Activated CD4-positive, alpha-beta T cell treated with anti-CD3 and anti-CD28 coated beads, Interleukin-2, amount 10 ng/mL, durations not matched to agents 24 days and 14 days (primary cell): ENCODE measurements at regions of chr3 and their contacts with region 1.

Region 1: GRCh38 chr3:146664403-146664802 is 59.3 kb upstream of the PLSCR5 start:
- DNase-seq: no peak
- H3K4me3 Mint-ChIP-seq: no peak overlapping the region
- H3K27ac Mint-ChIP-seq: no peak overlapping the region
- H3K4me1 Mint-ChIP-seq: no peaks in the 10 kb centered on the region
- H3K27me3 Mint-ChIP-seq: no peaks in the 10 kb centered on the region

Region 2: DNA sequence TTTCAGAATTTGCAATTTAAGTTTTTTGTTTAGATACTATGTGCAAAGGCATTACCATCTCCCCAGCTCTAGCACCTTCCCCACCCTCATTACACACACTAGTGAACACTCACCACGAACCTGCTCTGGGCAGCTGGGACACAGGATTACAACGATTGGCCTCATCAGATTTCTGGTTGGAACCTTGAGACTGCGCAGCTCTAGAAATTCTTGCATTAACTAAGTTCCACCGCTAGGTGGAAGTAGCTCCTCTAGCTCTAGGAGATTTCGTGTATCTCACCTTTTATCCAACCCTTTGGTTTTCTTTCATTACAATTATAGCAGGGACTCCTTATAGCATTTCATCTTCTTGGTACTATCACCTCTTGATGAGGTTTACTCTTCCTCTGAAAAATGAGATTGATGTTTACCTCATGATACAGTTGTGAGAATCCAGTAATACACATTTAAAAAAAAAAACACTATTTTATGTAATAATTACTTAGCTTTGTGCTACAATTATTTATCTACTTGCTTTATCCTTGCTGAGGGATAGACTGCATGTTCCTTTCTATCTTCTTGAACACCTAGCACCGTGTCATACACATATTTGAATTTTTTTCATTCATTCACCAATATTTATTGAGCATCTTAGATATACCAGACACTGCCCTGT is 474.8 kb before region 1 on chr3:
- intact Hi-C with region 1: no loop called
- DNase-seq: peak; percentile 73
- H3K4me3 Mint-ChIP-seq: no peak overlapping the region
- H3K27ac Mint-ChIP-seq: no peak overlapping the region
- H3K4me1 Mint-ChIP-seq: no peaks in the 10 kb centered on the region
- H3K27me3 Mint-ChIP-seq: peaks cover 8% of the 10 kb centered on the region

Region 3: GRCh38 chr3:146682171-146682570 is 17.8 kb after region 1 on chr3:
- intact Hi-C with region 1: loop called (anchors 1 kb)
- DNase-seq: no peak
- H3K4me3 Mint-ChIP-seq: no peak overlapping the region
- H3K27ac Mint-ChIP-seq: no peak overlapping the region
- H3K4me1 Mint-ChIP-seq: no peaks in the 10 kb centered on the region
- H3K27me3 Mint-ChIP-seq: no peaks in the 10 kb centered on the region